Cardiac septum (tissue), 1 donor: ENCODE measurements at regions of chr7 and their contacts with region 1.

Region 1: GRCh38 chr7:2451171-2452073 is 24.8 kb downstream of the GRIFIN start:
- DNase-seq: peak; percentile 92

Region 2: DNA sequence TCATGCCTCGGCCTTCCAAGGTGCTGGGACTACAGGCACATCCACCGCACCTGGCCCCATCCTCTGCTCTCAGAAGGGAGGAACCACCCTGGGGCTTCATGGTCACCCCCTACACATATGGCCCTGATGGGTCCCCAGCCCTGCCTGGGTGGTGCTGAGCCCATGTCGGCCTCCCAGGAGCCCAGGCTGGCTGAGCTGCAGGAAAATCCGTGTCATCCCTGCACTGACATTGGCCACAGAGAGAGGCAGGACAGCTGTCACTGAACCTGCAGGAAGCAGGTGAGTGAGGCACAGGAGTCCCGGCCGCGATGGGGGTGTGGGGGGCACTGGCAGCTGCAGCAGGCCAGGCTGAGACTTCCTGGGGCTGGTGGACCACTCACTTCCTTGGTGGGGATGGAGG is 16.8 kb after region 1 on chr7:
- intact Hi-C with region 1: loop called (anchors 2 kb)
- DNase-seq: no peak

Region 3: GRCh38 chr7:2680792-2681490 is 229.5 kb after region 1 on chr7:
- intact Hi-C with region 1: loop called (anchors 5 kb)
- DNase-seq: peak; percentile 91